ENCODE measurements at regions of chr18 and their contacts with region 1.

Region 1: DNA sequence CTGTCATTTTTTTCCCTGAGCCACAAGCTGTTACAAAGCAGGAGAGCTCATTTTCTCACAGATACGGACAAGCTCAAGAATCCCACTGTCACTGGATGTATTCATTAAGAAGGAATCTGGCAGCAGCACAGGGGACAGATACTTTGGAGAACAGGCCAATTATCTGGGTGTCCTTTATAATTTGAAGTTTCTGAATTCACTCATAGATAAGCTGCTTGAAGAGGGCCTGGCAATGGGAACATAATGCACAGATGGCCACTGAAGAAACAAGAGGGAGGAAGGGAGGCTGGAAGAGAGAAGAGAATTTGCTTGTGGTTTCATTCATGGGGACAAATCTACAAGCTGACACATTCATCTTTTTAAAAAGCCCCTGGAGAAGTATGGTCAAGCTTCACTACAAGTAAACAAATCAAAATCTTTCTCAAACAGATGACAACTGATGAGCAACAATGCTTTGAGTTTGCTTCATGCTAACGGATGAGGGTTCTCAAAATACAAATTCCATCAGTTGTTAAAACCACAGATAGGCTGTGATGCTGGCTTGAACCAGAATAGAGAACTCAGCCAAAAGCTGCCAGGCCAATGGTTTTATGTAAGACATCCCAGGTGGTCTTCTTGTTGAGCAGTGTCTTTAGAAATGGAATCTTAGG is 11.9 kb downstream of the BCL2 start:
- DNase-seq: no peak
- H3K4me3 ChIP-seq: no peak overlapping the region
- CTCF ChIP-seq: no peak

Region 2: DNA sequence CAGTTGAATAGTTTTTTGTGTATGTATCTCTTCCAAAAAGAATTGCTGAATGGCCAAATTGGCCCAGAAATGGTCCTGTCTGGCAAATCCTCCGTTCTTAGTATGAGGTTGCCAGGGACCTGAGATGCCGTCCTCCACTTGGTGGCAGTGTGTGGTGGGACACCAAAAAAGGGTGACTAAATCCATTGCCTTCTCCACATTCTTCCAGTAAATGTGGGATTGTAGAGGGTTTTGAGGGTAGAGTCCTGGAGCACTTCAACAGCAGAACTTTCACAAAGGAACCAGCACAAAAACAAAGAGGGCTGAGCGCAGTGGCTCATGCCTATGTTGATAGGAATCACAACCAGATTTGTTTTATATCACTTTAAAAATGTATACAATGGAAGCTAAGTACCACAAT is 188.0 kb before region 1 on chr18:
- in situ Hi-C with region 1: loop called (anchors 5 kb)
- DNase-seq: no peak
- H3K4me3 ChIP-seq: no peak overlapping the region
- CTCF ChIP-seq: peak; percentile 39

Region 3: DNA sequence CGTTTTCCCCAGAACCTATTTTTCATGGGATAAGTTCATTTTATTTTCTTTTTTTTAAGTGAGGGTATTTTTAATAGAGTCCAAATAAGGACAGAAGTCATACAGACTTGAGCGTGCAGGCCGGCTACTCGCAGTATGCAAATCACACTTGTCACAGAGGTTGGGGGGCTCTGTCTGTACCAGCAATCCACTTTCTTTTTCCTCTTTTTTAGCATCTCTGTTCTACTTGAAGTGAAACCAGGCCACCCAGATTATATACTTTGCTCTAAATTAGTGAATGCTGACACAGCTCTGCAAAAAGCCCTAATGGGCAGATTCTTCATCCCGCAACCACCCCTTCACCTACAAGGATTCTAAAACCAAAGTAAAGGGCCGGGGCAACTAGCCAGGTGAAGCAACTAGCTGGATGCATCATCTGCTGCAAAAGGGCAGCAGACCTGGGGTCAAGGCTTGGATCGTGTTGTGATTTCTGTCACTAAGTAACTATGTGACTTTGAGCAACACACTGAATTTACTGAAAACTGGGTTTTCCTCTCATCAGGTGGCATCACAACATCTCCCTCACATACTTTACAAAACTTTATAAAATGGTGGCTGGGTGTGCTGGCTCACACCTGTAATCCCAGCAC is 40.9 kb after region 1 on chr18:
- in situ Hi-C with region 1: no loop called
- DNase-seq: no peak
- H3K4me3 ChIP-seq: no peak overlapping the region
- CTCF ChIP-seq: no peak